ENCODE measurements at regions of chr12 and their contacts with region 1.

Region 1: GRCh38 chr12:117119592-117120198 is 20.5 kb upstream of the TESC start:
- DNase-seq: peak in 1 of 2 donors; percentile 58
- H3K4me3 ChIP-seq: no peak overlapping the region
- H3K27ac ChIP-seq: no peak overlapping the region
- H3K4me1 ChIP-seq: peaks cover 0 to 8% (median 5%) of the 10 kb centered on the region in 4 donors
- H3K27me3 ChIP-seq: no peaks in the 10 kb centered on the region
- CTCF ChIP-seq: peak; percentile 48 to 58

Region 2: DNA sequence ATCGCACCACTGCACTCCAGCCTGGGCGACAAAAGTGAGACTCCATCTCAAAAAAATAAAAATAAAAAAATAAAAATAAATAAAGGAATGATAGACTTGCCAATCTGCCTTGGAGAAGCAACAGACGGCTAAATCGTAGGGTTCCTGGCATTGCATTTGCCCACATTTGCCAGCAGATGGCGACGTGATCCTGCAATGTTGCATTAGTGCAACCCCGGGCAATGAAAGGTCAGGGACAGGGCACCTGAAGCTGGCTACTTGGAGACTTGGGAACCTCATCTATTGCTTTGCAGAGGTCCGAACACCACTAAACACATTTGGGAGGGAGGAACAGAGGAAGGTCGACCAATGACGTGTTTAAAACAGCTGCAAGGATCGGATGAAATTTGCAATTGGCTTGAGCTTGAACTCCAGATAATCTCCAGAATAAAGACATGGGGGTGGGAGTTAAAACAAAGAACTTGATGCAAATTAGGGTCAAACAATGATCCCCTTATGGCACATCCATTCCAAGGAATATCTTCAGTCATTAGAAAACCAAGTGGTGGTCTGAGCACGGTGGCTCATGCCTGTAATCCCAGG is 416.4 kb before region 1 on chr12:
- intact Hi-C with region 1: loop called (anchors 10 kb)
- DNase-seq: peak; percentile 60 to 75
- H3K4me3 ChIP-seq: no peak overlapping the region
- H3K27ac ChIP-seq: no peak overlapping the region
- H3K4me1 ChIP-seq: peaks cover 0 to under 1% (median 0%) of the 10 kb centered on the region in 4 donors
- H3K27me3 ChIP-seq: peaks cover 0 to 2% of the 10 kb centered on the region in 2 donors
- CTCF ChIP-seq: peak; percentile 72 to 89

Region 3: DNA sequence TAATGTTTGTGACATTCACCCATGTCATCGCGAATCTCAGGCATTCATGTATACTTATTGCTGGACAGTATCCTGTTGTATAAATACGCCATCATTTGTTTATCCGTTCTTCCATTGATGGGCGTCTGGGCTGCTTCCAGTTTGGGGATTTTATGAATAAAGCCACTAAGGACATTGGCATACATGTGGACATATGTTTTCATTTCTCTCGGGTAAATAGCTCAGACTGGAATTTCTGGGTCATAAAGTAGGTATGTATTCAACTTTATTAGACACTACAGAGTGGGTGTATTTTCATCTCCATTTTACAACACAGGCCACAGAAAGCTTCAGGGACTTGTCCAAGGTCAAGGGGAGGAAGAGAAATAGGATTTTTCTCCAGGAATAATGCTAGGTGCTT is 287.3 kb before region 1 on chr12:
- intact Hi-C with region 1: no loop called
- DNase-seq: no peak
- H3K4me3 ChIP-seq: no peak overlapping the region
- H3K27ac ChIP-seq: no peak overlapping the region
- H3K4me1 ChIP-seq: no peaks in the 10 kb centered on the region
- H3K27me3 ChIP-seq: no peaks in the 10 kb centered on the region
- CTCF ChIP-seq: no peak

Region 4: GRCh38 chr12:117025481-117026151 is 94.1 kb before region 1 on chr12:
- intact Hi-C with region 1: loop called (anchors 5 kb)
- DNase-seq: peak in 1 of 2 donors; percentile 55
- H3K4me3 ChIP-seq: no peak overlapping the region
- H3K27ac ChIP-seq: no peak overlapping the region
- H3K4me1 ChIP-seq: peaks cover 0 to 9% (median 4%) of the 10 kb centered on the region in 4 donors
- H3K27me3 ChIP-seq: no peaks in the 10 kb centered on the region
- CTCF ChIP-seq: peak; percentile 89 to 92

Region 5: GRCh38 chr12:117134059-117134458 is 14.4 kb after region 1 on chr12:
- intact Hi-C with region 1: no loop called
- DNase-seq: no peak
- H3K4me3 ChIP-seq: no peak overlapping the region
- H3K27ac ChIP-seq: no peak overlapping the region
- H3K4me1 ChIP-seq: no peaks in the 10 kb centered on the region
- H3K27me3 ChIP-seq: no peaks in the 10 kb centered on the region
- CTCF ChIP-seq: no peak

Measured in tibial artery (tissue), 4 donors.